ENCODE measurements at regions of chr4 and their contacts with region 1.

Region 1: GRCh38 chr4:73869130-73870050 is at the start of gene CXCL1:
- DNase-seq: peak; percentile 62
- ATAC-seq: peak; percentile 75
- H3K4me3 Mint-ChIP-seq: peak within 1 kb of the TSS; percentile 83
- H3K27ac Mint-ChIP-seq: no peak within 1 kb of the TSS
- H3K4me1 Mint-ChIP-seq: peaks cover 18% of the 10 kb centered on the region
- H3K27me3 Mint-ChIP-seq: peaks cover 36% of the 10 kb centered on the region
- CTCF ChIP-seq: no peak
- total RNA-seq, gene CXCL1: 0.85 to 1.4 TPM (median 1.4 TPM) in 3 replicates

Region 2: GRCh38 chr4:73853246-73853704 is 16.1 kb before region 1 on chr4 and contains the start of gene PF4V1:
- CTCF ChIA-PET with region 1: interaction called, 39 read pairs
- POLR2A ChIA-PET with region 1: no interaction called
- DNase-seq: peak; percentile 71
- ATAC-seq: peak; percentile 93
- H3K4me3 Mint-ChIP-seq: peak within 1 kb of the TSS; percentile 52
- H3K27ac Mint-ChIP-seq: no peak within 1 kb of the TSS
- H3K4me1 Mint-ChIP-seq: peaks cover 20% of the 10 kb centered on the region
- H3K27me3 Mint-ChIP-seq: peaks cover 18% of the 10 kb centered on the region
- CTCF ChIP-seq: no peak
- total RNA-seq, gene PF4V1: not detected in 3 replicates

Region 3: DNA sequence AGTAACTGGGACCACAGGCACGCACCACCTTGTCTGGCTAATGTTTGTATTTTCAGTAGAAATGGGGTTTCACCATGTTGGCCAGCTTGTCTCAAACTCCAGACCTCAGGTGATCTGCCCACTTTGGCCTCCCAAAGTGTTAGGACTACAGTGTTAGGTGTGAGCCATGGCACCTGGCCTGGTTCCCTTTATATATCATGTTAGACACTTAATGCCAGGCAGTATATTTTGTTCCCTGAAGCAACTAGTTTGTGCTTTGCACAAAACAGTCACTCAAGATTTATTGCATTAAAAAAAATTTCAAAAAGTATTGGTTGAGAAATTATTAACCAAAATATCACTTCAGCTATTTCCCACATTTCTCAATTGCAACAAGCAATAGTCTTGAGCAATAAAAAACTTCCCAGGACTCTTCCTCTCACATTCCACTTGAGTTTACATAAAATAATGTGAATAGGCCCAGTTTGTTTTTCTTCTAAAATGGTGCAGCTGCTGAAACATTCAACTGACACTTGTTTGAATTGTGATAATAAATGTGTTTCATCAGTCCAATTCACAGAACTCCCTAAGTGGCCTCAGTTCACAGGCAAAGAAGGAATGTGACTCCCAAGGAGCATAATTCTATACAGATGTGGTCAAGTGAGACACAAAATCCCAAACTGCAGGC is 22.5 kb after region 1 on chr4:
- CTCF ChIA-PET with region 1: no interaction called
- POLR2A ChIA-PET with region 1: no interaction called
- DNase-seq: no peak
- ATAC-seq: no peak
- H3K4me3 Mint-ChIP-seq: no peak overlapping the region
- H3K27ac Mint-ChIP-seq: no peak overlapping the region
- H3K4me1 Mint-ChIP-seq: peaks cover 5% of the 10 kb centered on the region; the same call in 1 of the 2 replicates
- H3K27me3 Mint-ChIP-seq: no peaks in the 10 kb centered on the region; the same call in 1 of the 2 replicates
- CTCF ChIP-seq: no peak

Region 4: GRCh38 chr4:73964862-73965611 is 95.6 kb after region 1 on chr4:
- CTCF ChIA-PET with region 1: interaction called, 13 read pairs
- POLR2A ChIA-PET with region 1: no interaction called
- DNase-seq: peak; percentile 82
- ATAC-seq: peak; percentile 98
- H3K4me3 Mint-ChIP-seq: no peak overlapping the region
- H3K27ac Mint-ChIP-seq: no peak overlapping the region
- H3K4me1 Mint-ChIP-seq: peaks cover 3% of the 10 kb centered on the region
- H3K27me3 Mint-ChIP-seq: peaks cover 6% of the 10 kb centered on the region
- CTCF ChIP-seq: peak; percentile 55

Region 5: DNA sequence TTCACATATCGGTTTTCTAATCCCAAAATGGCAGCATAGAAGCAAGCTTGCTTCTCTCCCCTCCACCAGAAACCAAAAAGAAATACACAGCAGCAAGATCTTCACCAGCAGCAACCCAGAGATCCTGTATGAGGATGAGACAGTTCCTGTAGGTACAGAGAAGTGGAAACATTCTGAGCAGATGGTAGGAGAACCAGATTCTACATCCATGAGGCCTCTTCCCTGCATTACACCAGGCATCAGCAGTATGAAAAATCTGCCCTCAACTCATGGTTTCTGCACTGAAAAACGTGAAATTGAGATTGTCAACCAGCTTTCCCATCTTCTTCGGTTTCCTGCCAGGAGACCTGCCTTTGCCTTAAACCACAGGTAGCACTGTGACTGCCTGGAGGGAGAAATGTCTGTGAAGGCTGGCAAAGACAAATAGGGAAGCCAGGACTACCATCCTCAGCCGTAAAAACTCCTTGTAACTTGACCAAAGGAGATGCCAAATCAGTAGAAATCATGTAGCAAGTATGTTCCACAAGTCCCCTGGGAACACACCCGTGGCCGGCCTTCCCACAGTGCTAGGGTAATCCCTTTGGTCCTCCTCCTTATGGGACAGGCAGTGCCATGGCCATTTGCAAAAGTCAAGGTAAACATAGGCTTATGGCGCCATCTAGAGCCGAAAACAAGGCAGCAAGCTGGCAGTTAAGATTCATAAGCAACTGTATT is 264.6 kb after region 1 on chr4:
- CTCF ChIA-PET with region 1: interaction called, 21 read pairs
- POLR2A ChIA-PET with region 1: no interaction called
- DNase-seq: peak; percentile 80
- ATAC-seq: peak; percentile 99
- H3K4me3 Mint-ChIP-seq: no peak overlapping the region
- H3K27ac Mint-ChIP-seq: no peak overlapping the region
- H3K4me1 Mint-ChIP-seq: peaks cover 6% of the 10 kb centered on the region
- H3K27me3 Mint-ChIP-seq: no peaks in the 10 kb centered on the region; the same call in 1 of the 2 replicates
- CTCF ChIP-seq: peak; percentile 63; the same call in 1 of the 2 replicates